ENCODE measurements at regions of chr11 and their contacts with region 1.

Region 1: GRCh38 chr11:64148200-64148916 is 17.6 kb downstream of the MACROD1 start:
- DNase-seq: peak; percentile 74
- H3K4me3 ChIP-seq: no peak overlapping the region
- H3K27ac ChIP-seq: no peak overlapping the region
- H3K4me1 ChIP-seq: peaks cover 6% of the 10 kb centered on the region
- CTCF ChIP-seq: peak; percentile 98

Region 2: GRCh38 chr11:63768237-63769043 is 379.9 kb before region 1 on chr11 and contains the start of gene ZFTA:
- CTCF ChIA-PET with region 1: no interaction called
- POLR2A ChIA-PET with region 1: no interaction called
- intact Hi-C with region 1: loop called (anchors 5 kb)
- DNase-seq: peak; percentile 84
- H3K4me3 ChIP-seq: peak within 1 kb of the TSS; percentile 91
- H3K27ac ChIP-seq: peak within 1 kb of the TSS; percentile 52
- H3K4me1 ChIP-seq: peaks cover 20% of the 10 kb centered on the region
- CTCF ChIP-seq: peak; percentile 52
- total RNA-seq, gene ZFTA: 6.8 and 10.3 TPM in 2 replicates

Region 3: DNA sequence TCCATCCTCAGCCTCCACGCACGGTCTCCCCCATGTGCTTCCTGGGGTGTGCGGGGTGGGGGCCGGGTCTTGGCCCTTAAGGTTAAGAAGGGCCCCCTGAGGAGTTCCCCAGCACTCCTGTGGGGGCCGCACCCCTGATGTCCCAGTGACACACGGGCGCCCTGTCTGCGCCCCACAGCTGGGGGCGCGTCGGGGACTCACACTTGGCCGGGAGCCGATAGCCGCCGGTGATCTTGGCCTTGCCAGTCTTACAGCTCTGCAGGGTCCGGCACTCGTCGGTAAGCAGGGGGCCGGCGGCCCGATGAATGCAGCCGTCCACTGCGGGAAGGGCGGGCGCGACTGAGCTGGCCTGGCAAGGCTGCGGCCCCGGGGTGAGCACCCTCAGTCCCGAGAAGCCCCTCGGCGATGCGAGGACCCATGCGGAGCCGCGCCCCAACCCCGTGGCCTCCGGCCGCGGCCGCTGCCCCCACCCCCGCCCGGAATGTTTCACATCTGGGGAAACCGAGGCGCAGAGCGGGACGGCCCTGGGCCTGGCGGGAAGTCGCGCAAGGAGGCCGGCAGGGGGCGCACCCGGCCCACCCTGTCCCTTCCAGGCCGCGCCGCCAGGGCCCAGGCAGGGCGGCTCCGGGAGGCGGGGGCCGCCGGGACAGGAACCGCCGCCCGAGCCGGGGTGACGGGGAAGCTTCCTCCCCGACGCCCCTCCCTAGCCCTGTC is 148.2 kb before region 1 on chr11:
- CTCF ChIA-PET with region 1: no interaction called
- POLR2A ChIA-PET with region 1: no interaction called
- intact Hi-C with region 1: loop called (anchors 1 kb)
- DNase-seq: peak; percentile 71
- H3K4me3 ChIP-seq: no peak overlapping the region
- H3K27ac ChIP-seq: no peak overlapping the region
- H3K4me1 ChIP-seq: peaks cover 9% of the 10 kb centered on the region
- CTCF ChIP-seq: peak; percentile 77

Region 4: GRCh38 chr11:64088162-64089026 is 60.0 kb before region 1 on chr11:
- CTCF ChIA-PET with region 1: no interaction called
- POLR2A ChIA-PET with region 1: no interaction called
- intact Hi-C with region 1: loop called (anchors 1 kb)
- DNase-seq: peak; percentile 45
- H3K4me3 ChIP-seq: no peak overlapping the region
- H3K27ac ChIP-seq: no peak overlapping the region
- H3K4me1 ChIP-seq: no peaks in the 10 kb centered on the region
- CTCF ChIP-seq: peak; percentile 75

Region 5: GRCh38 chr11:64100360-64100759 is 48.0 kb before region 1 on chr11:
- CTCF ChIA-PET with region 1: no interaction called
- POLR2A ChIA-PET with region 1: no interaction called
- intact Hi-C with region 1: loop called (anchors 5 kb)
- DNase-seq: peak; percentile 84
- H3K4me3 ChIP-seq: no peak overlapping the region
- H3K27ac ChIP-seq: no peak overlapping the region
- H3K4me1 ChIP-seq: peaks cover 14% of the 10 kb centered on the region
- CTCF ChIP-seq: peak; percentile 89

Measured in OCI-LY7 (cell line).